Thyroid gland (tissue), 4 donors: ENCODE measurements at regions of chr9 and their contacts with region 1.

Region 1: DNA sequence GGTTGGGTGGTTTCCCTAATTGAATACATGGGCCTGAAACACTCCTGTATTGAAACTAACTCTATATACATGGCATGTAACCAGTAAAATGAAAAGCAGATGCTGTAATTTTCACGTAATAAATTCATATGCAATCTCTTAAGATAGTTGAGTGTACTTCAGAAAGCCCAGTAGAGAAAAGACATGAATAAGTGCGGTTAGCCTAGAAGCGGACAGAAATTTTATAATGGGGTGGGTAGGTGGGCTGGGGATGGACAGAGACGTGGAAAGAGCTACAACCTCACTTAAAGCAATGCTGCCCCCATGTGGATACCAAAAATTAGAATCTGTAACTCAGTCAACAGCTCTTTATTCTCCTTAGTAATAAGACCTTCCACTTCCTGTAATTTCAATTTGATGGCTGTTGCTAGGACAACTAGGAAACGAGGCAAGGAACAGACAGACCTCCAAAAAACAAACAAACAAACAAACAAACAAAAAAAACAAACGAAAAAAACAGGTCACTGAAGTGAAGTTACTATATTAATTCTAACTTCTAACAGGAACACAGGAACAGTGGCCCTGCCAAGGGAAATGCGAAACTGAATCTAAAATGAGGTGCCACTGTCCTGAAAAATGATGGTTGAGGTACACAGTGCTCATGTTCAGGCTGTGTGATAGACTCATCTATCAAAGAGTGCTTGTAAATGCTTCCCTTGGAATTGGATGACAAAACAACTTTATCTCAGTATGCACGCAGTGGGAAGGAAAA is 103.4 kb upstream of the GNA14 start:
- DNase-seq: no peak
- H3K4me3 ChIP-seq: no peak overlapping the region
- H3K27ac ChIP-seq: no peak overlapping the region
- H3K4me1 ChIP-seq: peaks cover 3 to 14% of the 10 kb centered on the region in 2 donors
- H3K27me3 ChIP-seq: no peaks in the 10 kb centered on the region
- CTCF ChIP-seq: peak; percentile 18 to 79 (median 46)
- POLR2A ChIP-seq: no peak

Region 2: DNA sequence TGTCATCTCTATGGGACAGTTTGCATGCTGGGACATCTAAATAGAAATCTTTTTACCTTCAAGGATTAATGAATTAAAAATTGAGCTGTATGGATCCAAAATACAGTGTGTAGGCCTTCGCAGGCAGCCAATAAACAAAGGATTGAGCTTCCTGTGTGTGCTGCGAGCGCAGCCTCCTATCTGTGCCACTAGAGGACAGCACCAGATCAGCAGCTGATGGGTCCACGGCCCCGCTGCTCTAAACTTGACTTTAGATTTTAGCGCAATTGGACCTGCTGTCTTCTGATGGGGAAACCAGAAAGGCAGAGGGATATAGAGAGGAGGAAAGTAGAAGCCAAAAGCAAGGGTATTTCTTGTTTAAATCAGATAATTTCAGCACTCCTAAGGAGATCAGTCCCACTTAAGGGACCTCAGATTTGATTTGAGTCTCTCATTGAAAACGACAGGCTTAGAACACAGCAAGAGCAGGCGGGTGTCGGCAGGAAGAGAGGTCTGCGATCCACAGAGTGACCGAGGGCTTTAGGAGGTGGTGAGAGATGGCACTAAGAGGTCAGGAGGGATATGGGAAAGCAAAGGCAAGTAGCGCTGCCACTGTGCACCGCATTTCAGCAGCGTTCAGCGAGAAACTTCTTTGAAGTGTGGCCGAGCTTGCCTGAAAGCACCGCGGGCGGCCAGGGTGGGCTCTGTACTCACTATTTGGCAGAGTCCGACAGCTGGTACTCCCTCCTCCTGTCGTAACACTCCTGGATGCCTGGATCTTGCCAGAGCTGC is 317.7 kb before region 1 on chr9:
- intact Hi-C with region 1: loop called (anchors 10 kb)
- DNase-seq: peak; percentile 72 to 75
- H3K4me3 ChIP-seq: no peak overlapping the region
- H3K27ac ChIP-seq: no peak overlapping the region
- H3K4me1 ChIP-seq: no peaks in the 10 kb centered on the region
- H3K27me3 ChIP-seq: no peaks in the 10 kb centered on the region
- CTCF ChIP-seq: peak; percentile 85 to 98 (median 96)
- POLR2A ChIP-seq: no peak

Region 3: DNA sequence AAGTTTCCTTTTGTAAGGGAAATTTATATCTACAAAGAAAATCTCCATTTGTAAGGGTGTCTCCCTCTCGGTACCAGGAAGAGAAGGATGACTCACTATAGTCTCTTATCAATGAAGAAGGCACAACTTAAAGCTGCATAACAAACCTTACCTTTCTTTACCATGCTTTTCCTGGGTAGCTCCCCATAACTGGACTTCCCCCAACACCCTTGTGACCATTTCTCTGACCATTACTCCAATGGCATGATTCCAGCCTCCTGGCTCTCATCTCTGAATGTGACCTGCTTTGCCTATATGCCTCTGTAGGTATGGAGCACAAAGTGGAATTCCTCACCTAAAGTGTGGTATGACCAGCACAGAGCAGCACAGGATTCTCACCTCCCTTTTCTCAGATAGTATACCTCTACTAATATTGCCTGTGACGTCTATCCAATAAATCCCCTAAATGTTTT is 166.2 kb before region 1 on chr9:
- intact Hi-C with region 1: no loop called
- DNase-seq: no peak
- H3K4me3 ChIP-seq: no peak overlapping the region
- H3K27ac ChIP-seq: no peak overlapping the region
- H3K4me1 ChIP-seq: peaks cover 10 to 31% of the 10 kb centered on the region in 2 donors
- H3K27me3 ChIP-seq: no peaks in the 10 kb centered on the region
- CTCF ChIP-seq: no peak
- POLR2A ChIP-seq: no peak

Region 4: GRCh38 chr9:77648234-77649120 is 103.0 kb before region 1 on chr9 and contains the start of gene GNA14:
- intact Hi-C with region 1: no loop called
- DNase-seq: peak; percentile 78 to 81
- H3K4me3 ChIP-seq: peak within 1 kb of the TSS; percentile 68 to 87 (median 84)
- H3K27ac ChIP-seq: peak within 1 kb of the TSS; percentile 78 to 93 (median 91)
- H3K4me1 ChIP-seq: peaks cover 13 to 22% of the 10 kb centered on the region in 2 donors
- H3K27me3 ChIP-seq: no peaks in the 10 kb centered on the region
- CTCF ChIP-seq: peak in 3 of 6 experiments; percentile 23 to 46 (median 37)
- POLR2A ChIP-seq: peak in 1 of 2 donors; percentile 64
- total RNA-seq, gene GNA14: 13.9 to 26.3 (median 19.9) TPM